ENCODE measurements at regions of chr16 and their contacts with region 1.

Region 1: DNA sequence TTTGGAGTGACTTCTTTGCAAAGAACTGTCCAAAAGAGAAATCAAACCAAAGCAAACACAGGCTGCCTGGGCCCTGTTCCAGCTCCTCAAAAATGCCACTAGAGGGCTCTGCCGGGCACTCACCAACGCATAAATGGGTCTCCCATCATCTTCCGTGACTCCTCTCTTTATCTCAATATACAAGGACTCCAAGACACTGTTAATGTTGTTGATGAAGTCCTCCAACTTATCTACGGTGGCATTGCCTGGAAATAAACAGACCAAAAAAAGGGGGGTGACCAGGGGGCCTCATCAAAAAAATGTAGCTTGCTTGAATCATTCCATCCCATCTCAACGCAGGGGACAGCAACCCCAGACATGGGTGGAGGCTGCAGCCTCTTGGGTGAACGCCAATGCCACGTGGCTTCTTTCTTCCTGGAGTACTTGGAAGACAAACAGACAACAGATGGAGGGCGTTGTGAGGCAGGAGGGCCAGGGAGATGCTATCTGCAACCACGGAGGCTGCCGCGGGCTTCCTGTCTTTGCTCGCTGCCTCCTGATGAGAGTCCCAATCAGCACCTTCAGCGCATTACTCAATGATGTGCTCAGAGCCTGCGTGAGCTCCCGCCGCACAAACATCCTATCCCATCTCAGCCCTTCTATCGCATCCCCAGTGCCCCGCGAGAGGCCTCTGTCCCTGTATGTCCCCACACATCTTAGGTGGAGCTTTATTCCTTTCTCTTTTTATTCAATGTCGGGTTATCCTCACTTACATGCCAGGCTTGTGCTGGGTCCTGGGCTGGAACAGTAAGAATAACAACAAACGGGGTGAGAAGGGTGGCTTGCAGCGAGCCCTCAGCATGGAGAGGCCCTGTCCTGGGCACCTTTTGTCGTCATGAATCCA is 32.0 kb downstream of the KDM8 start:
- DNase-seq: peak; percentile 94
- H3K4me3 Mint-ChIP-seq: peak overlapping the region; percentile 77
- H3K27ac Mint-ChIP-seq: peak overlapping the region; percentile 100
- H3K4me1 Mint-ChIP-seq: peaks cover 87% of the 10 kb centered on the region
- H3K27me3 Mint-ChIP-seq: no peaks in the 10 kb centered on the region

Region 2: GRCh38 chr16:27080870-27081269 is 154.4 kb before region 1 on chr16:
- intact Hi-C with region 1: no loop called
- DNase-seq: no peak
- H3K4me3 Mint-ChIP-seq: no peak overlapping the region
- H3K27ac Mint-ChIP-seq: no peak overlapping the region
- H3K4me1 Mint-ChIP-seq: no peaks in the 10 kb centered on the region
- H3K27me3 Mint-ChIP-seq: peaks cover 6% of the 10 kb centered on the region

Region 3: DNA sequence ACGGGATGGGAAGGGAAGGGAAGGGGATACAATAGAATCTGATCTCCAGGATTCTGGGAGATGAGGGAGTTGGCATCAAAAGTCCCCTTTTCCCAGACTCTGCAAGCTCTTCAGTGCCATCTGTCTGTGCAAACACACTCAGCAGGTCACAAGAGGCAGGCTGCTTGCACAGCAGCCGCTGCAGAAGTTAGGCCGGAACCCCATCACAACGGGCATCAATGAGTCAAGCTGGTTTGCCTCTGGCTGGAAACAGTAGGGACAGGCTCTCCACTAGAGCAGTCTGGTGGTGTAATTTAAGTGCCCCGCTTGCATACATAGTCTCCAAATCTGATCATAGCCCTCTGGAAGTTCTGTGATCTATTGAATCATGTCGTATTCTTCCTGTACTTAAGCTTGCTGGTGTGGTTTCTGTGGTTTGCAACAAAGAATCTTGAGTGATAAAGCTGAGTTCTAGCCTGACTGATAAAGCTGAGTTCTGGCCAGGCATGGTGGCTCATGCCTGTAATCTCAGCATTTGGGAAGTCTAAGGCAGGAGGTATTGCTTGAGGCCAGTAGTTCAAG is 65.7 kb before region 1 on chr16:
- intact Hi-C with region 1: loop called (anchors 1 kb)
- DNase-seq: peak; percentile 67
- H3K4me3 Mint-ChIP-seq: peak overlapping the region; percentile 39
- H3K27ac Mint-ChIP-seq: peak overlapping the region; percentile 82
- H3K4me1 Mint-ChIP-seq: peaks cover 46% of the 10 kb centered on the region
- H3K27me3 Mint-ChIP-seq: no peaks in the 10 kb centered on the region

Region 4: GRCh38 chr16:27245276-27246172 is 10.2 kb after region 1 on chr16:
- intact Hi-C with region 1: loop called (anchors 1 kb)
- DNase-seq: peak; percentile 69
- H3K4me3 Mint-ChIP-seq: peak overlapping the region; percentile 3
- H3K27ac Mint-ChIP-seq: peak overlapping the region; percentile 91
- H3K4me1 Mint-ChIP-seq: peaks cover 90% of the 10 kb centered on the region
- H3K27me3 Mint-ChIP-seq: no peaks in the 10 kb centered on the region

Region 5: GRCh38 chr16:27281243-27281642 is 45.9 kb after region 1 on chr16:
- intact Hi-C with region 1: loop called (anchors 1 kb)
- DNase-seq: no peak
- H3K4me3 Mint-ChIP-seq: peak overlapping the region; percentile 87
- H3K27ac Mint-ChIP-seq: peak overlapping the region; percentile 93
- H3K4me1 Mint-ChIP-seq: peaks cover 54% of the 10 kb centered on the region
- H3K27me3 Mint-ChIP-seq: no peaks in the 10 kb centered on the region

Region 6: DNA sequence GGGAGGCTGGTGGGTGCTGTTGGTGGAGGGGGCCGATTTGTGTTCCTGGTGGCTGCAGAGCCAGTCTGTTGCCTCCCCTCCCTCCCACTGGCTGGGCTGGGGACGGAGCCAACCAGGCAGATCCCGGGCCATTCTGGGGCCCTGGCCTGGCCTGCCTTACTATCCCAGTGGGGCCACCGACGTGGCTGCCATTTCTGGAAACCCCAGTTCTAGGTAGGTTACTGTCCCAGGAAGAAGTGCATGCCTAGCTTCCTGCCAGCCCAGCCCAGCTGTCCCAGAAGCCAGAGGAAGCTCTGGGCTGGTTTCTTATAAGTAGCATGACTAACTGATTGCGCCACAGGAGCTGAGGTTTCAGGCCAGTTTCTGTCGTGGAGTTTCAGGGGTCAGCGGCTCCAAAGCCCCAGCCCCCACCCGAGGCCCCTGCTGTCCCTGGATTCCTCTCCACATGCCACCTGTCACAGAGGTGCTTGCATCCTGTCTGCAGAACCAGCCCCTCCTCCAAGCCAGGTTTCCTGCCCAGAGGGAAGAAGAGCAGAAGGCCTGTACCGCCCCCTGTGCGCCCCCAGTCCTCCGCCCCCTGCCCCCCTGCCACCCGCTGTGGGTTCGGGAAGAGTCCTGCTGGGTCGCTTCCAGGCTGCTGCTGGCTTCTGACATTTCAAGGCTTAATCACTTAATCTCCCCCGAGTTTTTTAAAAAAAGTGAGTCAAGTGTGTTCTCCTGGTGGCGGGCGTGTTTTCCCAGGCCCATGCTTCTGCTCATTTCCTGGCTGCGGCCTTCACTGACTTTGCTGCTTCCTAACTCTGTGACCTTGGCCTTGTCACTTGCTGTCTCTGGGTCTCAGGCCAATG is 91.7 kb after region 1 on chr16:
- intact Hi-C with region 1: loop called (anchors 1 kb)
- DNase-seq: no peak
- H3K4me3 Mint-ChIP-seq: peak overlapping the region; percentile 54
- H3K27ac Mint-ChIP-seq: peak overlapping the region; percentile 89
- H3K4me1 Mint-ChIP-seq: peaks cover 69% of the 10 kb centered on the region
- H3K27me3 Mint-ChIP-seq: no peaks in the 10 kb centered on the region

Region 7: GRCh38 chr16:27455700-27456099 is 220.4 kb after region 1 on chr16:
- intact Hi-C with region 1: loop called (anchors 2 kb)
- DNase-seq: no peak
- H3K4me3 Mint-ChIP-seq: no peak overlapping the region
- H3K27ac Mint-ChIP-seq: peak overlapping the region; percentile 74
- H3K4me1 Mint-ChIP-seq: peaks cover 29% of the 10 kb centered on the region
- H3K27me3 Mint-ChIP-seq: no peaks in the 10 kb centered on the region

Measured in activated T-helper 2 cell treated with anti-CD3 and anti-CD28 coated beads, Interferon-gamma antibody, Interleukin-2, Interleukin-4, amounts not matched to agents 10 μg/mL and 5 μg/mL and 100 μg/mL, durations not matched to agents 14 hours and 24 hours and 36 hours (primary cell).